ENCODE measurements at regions of chr1 and their contacts with region 1.

Region 1: DNA sequence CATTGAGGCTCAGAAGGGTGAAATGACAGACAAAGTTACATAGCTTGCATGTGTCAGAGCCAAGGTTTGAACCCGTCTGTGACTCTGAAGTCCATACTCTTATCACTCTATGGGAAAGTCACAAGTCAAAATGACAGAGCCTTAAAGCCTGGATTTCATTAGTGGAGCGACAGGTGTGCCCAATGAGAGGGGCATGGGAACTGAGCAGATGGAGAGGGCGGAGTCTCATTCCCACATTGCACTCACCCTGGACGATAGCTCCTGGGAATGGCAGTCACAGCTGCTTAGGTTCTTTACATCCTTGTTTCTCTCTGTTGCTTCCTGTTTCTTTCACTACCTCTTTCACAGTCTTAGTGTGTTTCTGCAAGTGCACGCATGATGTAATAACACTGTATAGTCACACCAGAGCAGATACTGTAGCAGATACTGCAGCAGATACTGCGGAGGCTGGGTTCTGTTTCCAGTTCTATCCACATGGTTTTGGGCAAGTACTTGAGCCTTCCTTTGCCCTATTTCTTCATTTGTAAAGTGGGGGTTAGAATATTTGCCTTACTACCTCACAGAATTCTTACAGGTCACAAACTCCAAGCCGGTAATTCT is 127.2 kb downstream of the ZSCAN20 start:
- DNase-seq: no peak
- H3K4me3 ChIP-seq: no peak overlapping the region
- CTCF ChIP-seq: no peak

Region 2: GRCh38 chr1:33610864-33611455 is 11.3 kb after region 1 on chr1:
- CTCF ChIA-PET with region 1: interaction called, 56 read pairs
- POLR2A ChIA-PET with region 1: no interaction called
- DNase-seq: no peak
- H3K4me3 ChIP-seq: no peak overlapping the region
- CTCF ChIP-seq: no peak

Measured in AG04449 (cell line).